WTC11 (cell line): ENCODE measurements at regions of chr22 and their contacts with region 1.

Region 1: DNA sequence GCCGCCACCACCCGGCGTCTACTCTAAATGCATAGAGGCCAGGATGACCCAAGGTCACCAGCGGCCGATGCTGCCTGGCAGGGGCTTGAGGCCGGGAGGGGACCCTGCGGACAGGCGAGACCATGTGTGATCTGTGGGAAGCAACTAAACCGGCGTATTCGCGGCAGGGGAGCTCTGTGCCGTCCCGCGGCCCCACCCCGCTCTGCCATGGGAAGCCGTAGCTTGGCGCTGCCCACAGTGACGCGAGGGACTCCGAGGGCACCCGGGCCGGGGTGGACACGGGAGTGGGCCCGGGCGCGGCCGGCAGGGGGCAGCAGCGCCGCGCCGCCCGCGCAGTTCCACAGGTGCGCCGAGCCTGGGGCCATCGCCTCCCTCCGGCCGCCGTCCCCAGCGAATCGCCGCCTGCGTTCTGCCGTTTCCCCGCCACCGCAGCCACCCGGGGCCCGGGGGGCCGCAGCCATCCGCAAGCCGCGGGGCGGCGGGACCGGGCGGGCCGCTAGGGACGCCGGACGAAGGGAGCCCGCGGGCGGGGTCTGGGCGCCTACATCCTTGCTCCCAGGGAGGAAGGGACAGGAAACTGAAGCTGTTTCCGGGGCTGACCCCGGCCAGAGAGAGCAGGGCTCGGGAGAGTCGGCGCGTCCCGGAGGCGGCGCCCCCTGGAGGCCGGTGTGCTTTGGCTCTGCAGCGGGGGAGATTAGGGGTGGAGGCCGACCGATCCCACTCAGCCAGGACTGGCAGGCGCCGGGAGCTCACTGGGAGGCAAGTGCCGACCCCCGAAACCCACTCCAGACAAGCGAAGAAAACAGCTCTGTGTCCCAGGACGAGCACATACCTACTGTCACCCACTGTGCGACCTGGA is 12.5 kb upstream of the HDHD5 start:
- DNase-seq: peak; percentile 95
- ATAC-seq: peak; percentile 85
- H3K4me3 Mint-ChIP-seq: peak overlapping the region; percentile 67
- H3K27ac Mint-ChIP-seq: peak overlapping the region; percentile 96
- H3K4me1 Mint-ChIP-seq: peaks cover 19% of the 10 kb centered on the region
- H3K27me3 Mint-ChIP-seq: peaks cover 3% of the 10 kb centered on the region; the same call in 1 of the 2 replicates
- CTCF ChIP-seq: peak; percentile 94

Region 2: GRCh38 chr22:17095538-17095937 is 76.0 kb before region 1 on chr22:
- CTCF ChIA-PET with region 1: interaction called, 11 read pairs
- POLR2A ChIA-PET with region 1: interaction called, 3 read pairs
- DNase-seq: peak; percentile 64
- ATAC-seq: peak; percentile 82
- H3K4me3 Mint-ChIP-seq: no peak overlapping the region
- H3K27ac Mint-ChIP-seq: no peak overlapping the region
- H3K4me1 Mint-ChIP-seq: peaks cover 8% of the 10 kb centered on the region
- H3K27me3 Mint-ChIP-seq: no peaks in the 10 kb centered on the region
- CTCF ChIP-seq: peak; percentile 32; the same call in 1 of the 2 replicates

Region 3: GRCh38 chr22:17188237-17188636 is 16.7 kb after region 1 on chr22:
- CTCF ChIA-PET with region 1: interaction called, 215 read pairs
- POLR2A ChIA-PET with region 1: interaction called, 8 read pairs
- DNase-seq: no peak
- ATAC-seq: no peak
- H3K4me3 Mint-ChIP-seq: no peak overlapping the region
- H3K27ac Mint-ChIP-seq: no peak overlapping the region
- H3K4me1 Mint-ChIP-seq: no peaks in the 10 kb centered on the region
- H3K27me3 Mint-ChIP-seq: no peaks in the 10 kb centered on the region
- CTCF ChIP-seq: no peak

Region 4: DNA sequence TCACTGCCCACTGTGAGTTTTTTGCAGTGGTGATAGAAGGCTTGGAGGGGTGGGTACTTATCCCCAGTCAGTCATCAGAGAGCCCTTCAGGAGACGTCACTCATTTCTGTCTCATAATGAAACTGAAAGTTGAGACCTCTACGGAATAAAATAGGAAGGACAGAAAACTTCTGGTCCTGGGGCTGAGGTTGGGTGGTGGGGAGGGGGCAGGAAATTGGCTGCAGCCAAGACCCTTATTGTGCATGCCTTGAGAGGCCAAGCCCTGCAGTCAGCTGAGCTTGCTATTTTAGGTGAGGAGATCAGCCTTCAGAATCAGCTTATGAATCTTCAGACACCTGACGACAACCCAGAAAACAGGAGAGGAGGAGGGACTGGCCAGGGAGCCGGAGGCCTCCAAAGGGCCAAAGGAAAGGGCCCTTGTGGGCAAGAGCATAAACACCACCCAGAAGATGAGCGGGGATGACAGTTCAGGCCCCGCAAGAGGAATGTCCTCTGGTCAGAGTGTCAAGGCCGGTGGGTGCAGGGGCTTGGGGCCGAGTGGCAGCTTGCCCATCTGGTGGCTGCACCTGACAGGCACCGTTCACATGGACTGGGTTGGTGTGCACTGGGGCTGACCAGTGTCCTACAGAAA is 65.6 kb after region 1 on chr22:
- CTCF ChIA-PET with region 1: interaction called, 106 read pairs
- POLR2A ChIA-PET with region 1: interaction called, 19 read pairs
- DNase-seq: no peak
- ATAC-seq: no peak
- H3K4me3 Mint-ChIP-seq: no peak overlapping the region
- H3K27ac Mint-ChIP-seq: peak overlapping the region; percentile 91
- H3K4me1 Mint-ChIP-seq: peaks cover 62% of the 10 kb centered on the region
- H3K27me3 Mint-ChIP-seq: no peaks in the 10 kb centered on the region
- CTCF ChIP-seq: no peak

Region 5: DNA sequence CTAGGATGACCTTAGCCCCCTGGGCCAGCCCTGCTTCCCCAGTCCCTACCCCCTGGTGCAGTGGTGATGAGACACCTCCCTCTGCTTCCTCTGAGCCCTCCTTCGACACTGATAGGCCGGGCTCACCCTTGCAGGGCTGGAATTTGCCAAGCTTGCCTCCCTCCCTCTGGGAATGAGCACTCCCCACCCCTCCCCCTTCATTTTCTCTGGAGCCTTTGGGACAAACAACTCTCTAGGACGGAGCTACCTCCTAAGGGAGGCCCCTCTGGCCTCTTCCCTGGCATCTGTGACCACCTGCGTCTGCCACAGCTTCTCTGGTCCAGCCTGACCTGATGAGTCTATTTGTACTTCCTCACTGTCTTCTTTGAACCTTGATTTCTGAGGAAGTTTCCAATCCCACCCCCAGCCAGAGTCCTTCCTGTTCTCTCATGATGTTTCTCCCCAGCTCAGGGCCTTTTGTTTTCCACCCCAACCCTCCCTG is 101.0 kb after region 1 on chr22:
- CTCF ChIA-PET with region 1: interaction called, 73 read pairs
- POLR2A ChIA-PET with region 1: interaction called, 12 read pairs
- DNase-seq: peak; percentile 65
- ATAC-seq: peak; percentile 83
- H3K4me3 Mint-ChIP-seq: peak overlapping the region; percentile 27; the same call in 1 of the 2 replicates
- H3K27ac Mint-ChIP-seq: peak overlapping the region; percentile 98
- H3K4me1 Mint-ChIP-seq: peaks cover 54% of the 10 kb centered on the region
- H3K27me3 Mint-ChIP-seq: no peaks in the 10 kb centered on the region
- CTCF ChIP-seq: no peak

Region 6: DNA sequence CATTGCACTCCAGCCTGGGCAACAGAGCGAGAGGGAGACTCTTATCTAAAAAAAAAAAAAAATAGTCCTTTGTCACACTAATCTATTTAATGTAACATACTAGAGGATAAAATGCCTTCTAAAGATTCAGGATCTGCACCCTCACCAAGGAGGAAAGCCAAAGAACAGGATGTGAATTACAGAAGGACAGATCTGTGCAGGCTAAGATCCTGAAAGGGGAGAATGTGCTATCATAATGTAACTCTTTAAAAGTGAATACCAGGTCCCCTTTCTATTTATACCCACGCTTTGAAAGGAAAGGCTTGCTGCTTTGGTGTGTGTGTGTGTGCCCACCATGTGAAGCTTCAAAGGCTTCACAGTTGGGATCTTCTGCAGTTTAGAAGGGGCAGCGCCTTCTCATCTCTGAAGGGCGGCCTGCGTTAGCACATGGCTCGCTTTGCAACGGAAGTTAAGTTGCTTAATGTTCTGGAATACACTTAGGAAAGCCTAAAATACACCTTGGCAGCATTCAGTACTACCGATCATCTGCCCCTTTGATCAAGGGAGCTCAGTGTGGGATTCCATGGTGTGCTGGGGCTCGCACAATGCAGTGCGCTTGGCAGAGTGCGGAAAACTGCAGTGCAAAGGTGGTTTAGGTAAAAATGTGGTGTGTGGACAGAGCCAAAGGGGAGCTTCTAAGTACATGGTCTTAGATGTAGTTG is 204.5 kb after region 1 on chr22:
- CTCF ChIA-PET with region 1: interaction called, 14 read pairs
- POLR2A ChIA-PET with region 1: no interaction called
- DNase-seq: no peak
- ATAC-seq: no peak
- H3K4me3 Mint-ChIP-seq: peak overlapping the region; percentile 28; the same call in 1 of the 2 replicates
- H3K27ac Mint-ChIP-seq: peak overlapping the region; percentile 77
- H3K4me1 Mint-ChIP-seq: peaks cover 90% of the 10 kb centered on the region
- H3K27me3 Mint-ChIP-seq: no peaks in the 10 kb centered on the region
- CTCF ChIP-seq: no peak

Region 7: GRCh38 chr22:17536269-17536668 is 364.7 kb after region 1 on chr22:
- CTCF ChIA-PET with region 1: interaction called, 15 read pairs
- POLR2A ChIA-PET with region 1: interaction called, 3 read pairs
- DNase-seq: no peak
- ATAC-seq: no peak
- H3K4me3 Mint-ChIP-seq: no peak overlapping the region
- H3K27ac Mint-ChIP-seq: peak overlapping the region; percentile 81
- H3K4me1 Mint-ChIP-seq: peaks cover 13% of the 10 kb centered on the region
- H3K27me3 Mint-ChIP-seq: no peaks in the 10 kb centered on the region
- CTCF ChIP-seq: no peak